ENCODE measurements at regions of chr16 and their contacts with region 1.

Region 1: GRCh38 chr16:31286421-31287032 is 26.8 kb downstream of the ITGAM start:
- DNase-seq: no peak
- H3K4me3 ChIP-seq: no peak overlapping the region
- H3K27ac ChIP-seq: no peak overlapping the region
- H3K4me1 ChIP-seq: no peaks in the 10 kb centered on the region
- H3K27me3 ChIP-seq: no peaks in the 10 kb centered on the region
- CTCF ChIP-seq: no peak

Region 2: DNA sequence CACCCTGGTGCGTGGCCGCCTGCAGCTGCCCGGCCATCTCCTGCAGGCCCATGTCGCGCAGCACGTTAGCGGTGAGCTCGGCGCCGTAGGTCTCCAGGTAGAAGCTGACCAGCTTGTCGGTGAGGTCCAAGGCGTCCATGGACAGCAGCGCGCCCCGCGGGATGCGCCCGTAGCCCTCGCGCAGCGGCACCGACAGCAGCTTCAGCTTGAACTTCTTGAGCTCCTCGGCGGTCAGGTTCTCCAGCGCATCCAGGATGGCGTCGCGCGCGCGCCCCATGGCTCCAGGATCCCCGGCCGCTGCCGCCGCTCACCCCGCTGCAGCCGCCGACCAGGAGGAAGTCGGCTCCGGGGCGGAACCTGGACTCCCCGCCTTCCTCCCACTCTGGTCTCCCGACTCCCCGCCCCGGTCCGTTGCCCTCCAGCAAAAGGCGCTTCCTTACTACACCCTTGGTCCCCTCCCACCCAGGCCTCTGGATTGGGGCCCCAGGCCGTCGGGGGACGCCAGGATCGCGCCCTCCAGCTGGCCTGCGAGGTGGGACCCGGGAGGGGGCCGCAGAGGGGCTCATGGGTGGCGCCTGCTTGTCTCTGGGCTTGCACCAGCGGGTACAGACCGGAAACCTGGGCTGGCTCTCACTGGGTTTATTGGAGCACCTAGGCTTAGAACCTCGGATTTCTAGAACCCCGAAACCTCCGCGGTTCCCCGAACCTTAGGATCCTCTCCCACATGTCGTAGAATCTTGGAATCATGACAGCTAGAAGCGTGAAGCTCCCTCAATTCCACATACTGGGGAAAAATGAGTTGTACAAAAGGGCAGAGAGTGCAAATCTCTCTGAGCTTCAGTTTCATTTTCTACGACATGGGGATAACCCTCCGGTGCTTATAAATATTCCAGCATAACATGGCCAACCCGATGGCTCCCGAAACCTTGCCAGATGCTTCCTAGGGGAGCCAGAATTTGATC is 83.8 kb before region 1 on chr16 and contains the start of gene PYCARD:
- CTCF ChIA-PET with region 1: no interaction called
- POLR2A ChIA-PET with region 1: interaction called, 10 read pairs
- intact Hi-C with region 1: no loop called
- DNase-seq: no peak
- H3K4me3 ChIP-seq: peak within 1 kb of the TSS; percentile 49
- H3K27ac ChIP-seq: no peak within 1 kb of the TSS
- H3K4me1 ChIP-seq: no peaks in the 10 kb centered on the region
- H3K27me3 ChIP-seq: peaks cover 9% of the 10 kb centered on the region
- CTCF ChIP-seq: no peak
- total RNA-seq, gene PYCARD: 1.8 and 2.0 TPM in 2 replicates

Region 3: GRCh38 chr16:31327646-31328242 is 41.2 kb after region 1 on chr16:
- CTCF ChIA-PET with region 1: no interaction called
- POLR2A ChIA-PET with region 1: no interaction called
- intact Hi-C with region 1: no loop called
- DNase-seq: no peak
- H3K4me3 ChIP-seq: no peak overlapping the region
- H3K27ac ChIP-seq: no peak overlapping the region
- H3K4me1 ChIP-seq: no peaks in the 10 kb centered on the region
- H3K27me3 ChIP-seq: peaks cover 38% of the 10 kb centered on the region
- CTCF ChIP-seq: no peak